ENCODE measurements at regions of chrX and their contacts with region 1.

Region 1: DNA sequence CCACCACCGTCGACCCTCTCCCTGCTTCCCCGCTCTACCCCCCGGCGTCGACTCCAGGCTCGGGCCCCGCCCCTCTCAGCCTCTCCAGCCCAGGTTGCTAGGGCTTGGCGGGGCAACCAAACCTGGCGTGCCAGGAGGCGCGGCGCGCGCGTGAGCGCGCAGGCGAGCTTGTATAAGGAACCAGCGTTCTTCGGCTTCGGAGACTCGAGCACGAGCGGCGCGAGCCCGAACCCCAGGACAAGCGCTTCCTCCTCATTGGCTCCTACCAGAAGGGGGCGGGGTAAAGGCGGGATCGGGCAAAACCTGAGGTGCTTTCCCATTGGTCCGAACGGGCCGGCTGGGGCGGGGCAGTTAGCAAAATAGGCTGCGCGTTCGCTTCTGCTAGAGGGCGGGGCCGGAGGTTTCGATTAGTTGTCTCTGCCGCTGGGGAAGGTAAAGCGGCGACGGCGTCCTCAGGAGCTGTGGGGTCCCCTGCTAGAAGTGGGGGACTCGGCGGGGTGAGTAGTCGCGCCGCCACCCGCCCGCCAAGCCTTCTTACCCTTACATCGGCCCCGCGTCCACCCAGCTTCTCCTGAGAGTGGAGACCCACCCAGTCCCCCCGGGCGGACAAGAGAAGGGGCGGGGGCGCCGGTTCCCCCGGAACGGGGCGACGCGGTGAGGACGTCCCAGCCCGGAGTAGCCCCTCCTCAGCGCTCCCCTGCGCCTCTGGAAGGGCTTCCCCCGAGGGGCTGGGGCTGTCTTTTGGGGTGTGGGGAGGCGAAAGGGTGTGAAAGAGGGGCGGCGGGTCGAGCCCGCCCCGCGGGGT is at the start of gene CDKL5:
- DNase-seq: peak; percentile 95 to 98 (median 97)
- ATAC-seq: peak; percentile 98 to 99 (median 98)
- H3K4me3 ChIP-seq: peak within 1 kb of the TSS; percentile 45 to 89 (median 77)
- H3K27ac ChIP-seq: peak within 1 kb of the TSS in 11 of 12 donors; percentile 53 to 87 (median 78)
- H3K4me1 ChIP-seq: peaks cover 0 to 12% (median 0%) of the 10 kb centered on the region in 12 donors
- H3K27me3 ChIP-seq: peaks cover 0 to 34% (median 0%) of the 10 kb centered on the region in 9 donors
- CTCF ChIP-seq: no peak
- POLR2A ChIP-seq: peak; percentile 64 to 93
- total RNA-seq, gene CDKL5: 5.4 to 12.5 (median 9.8) TPM

Region 2: GRCh38 chrX:17987783-17988182 is 437.6 kb before region 1 on chrX:
- intact Hi-C with region 1: no loop called
- DNase-seq: no peak
- ATAC-seq: no peak
- H3K4me3 ChIP-seq: no peak overlapping the region
- H3K27ac ChIP-seq: no peak overlapping the region
- H3K4me1 ChIP-seq: no peaks in the 10 kb centered on the region
- H3K27me3 ChIP-seq: peaks cover 0 to 8% (median 0%) of the 10 kb centered on the region in 9 donors
- CTCF ChIP-seq: no peak
- POLR2A ChIP-seq: no peak

Region 3: GRCh38 chrX:18574591-18574990 is 149.2 kb after region 1 on chrX:
- intact Hi-C with region 1: loop called in 1 of 10 experiments (anchors 10 kb)
- DNase-seq: peak in 4 of 5 donors; percentile 10 to 49 (median 36)
- ATAC-seq: peak; percentile 22 to 76 (median 69)
- H3K4me3 ChIP-seq: no peak overlapping the region
- H3K27ac ChIP-seq: peak overlapping the region in 1 of 12 donors; percentile 13
- H3K4me1 ChIP-seq: peaks cover 0 to 13% (median 0%) of the 10 kb centered on the region in 12 donors
- H3K27me3 ChIP-seq: no peaks in the 10 kb centered on the region
- CTCF ChIP-seq: no peak
- POLR2A ChIP-seq: no peak

Region 4: GRCh38 chrX:18596096-18596495 is 170.7 kb after region 1 on chrX:
- intact Hi-C with region 1: loop called in 1 of 10 experiments (anchors 10 kb)
- DNase-seq: no peak
- ATAC-seq: peak; percentile 57 to 85 (median 72)
- H3K4me3 ChIP-seq: no peak overlapping the region
- H3K27ac ChIP-seq: no peak overlapping the region
- H3K4me1 ChIP-seq: no peaks in the 10 kb centered on the region
- H3K27me3 ChIP-seq: no peaks in the 10 kb centered on the region
- CTCF ChIP-seq: no peak
- POLR2A ChIP-seq: no peak

Region 5: GRCh38 chrX:18674788-18675735 is 249.7 kb after region 1 on chrX:
- intact Hi-C with region 1: loop called in 6 of 10 experiments (anchors 5 to 10 kb)
- DNase-seq: peak; percentile 74 to 89 (median 78)
- ATAC-seq: peak; percentile 92 to 96 (median 93)
- H3K4me3 ChIP-seq: peak overlapping the region; percentile 36 to 93 (median 69)
- H3K27ac ChIP-seq: peak overlapping the region in 11 of 12 donors; percentile 76 to 92 (median 85)
- H3K4me1 ChIP-seq: no peaks in the 10 kb centered on the region
- H3K27me3 ChIP-seq: peaks cover 0 to 4% (median 0%) of the 10 kb centered on the region in 9 donors
- CTCF ChIP-seq: no peak
- POLR2A ChIP-seq: peak in 1 of 2 donors; percentile 34

Region 6: DNA sequence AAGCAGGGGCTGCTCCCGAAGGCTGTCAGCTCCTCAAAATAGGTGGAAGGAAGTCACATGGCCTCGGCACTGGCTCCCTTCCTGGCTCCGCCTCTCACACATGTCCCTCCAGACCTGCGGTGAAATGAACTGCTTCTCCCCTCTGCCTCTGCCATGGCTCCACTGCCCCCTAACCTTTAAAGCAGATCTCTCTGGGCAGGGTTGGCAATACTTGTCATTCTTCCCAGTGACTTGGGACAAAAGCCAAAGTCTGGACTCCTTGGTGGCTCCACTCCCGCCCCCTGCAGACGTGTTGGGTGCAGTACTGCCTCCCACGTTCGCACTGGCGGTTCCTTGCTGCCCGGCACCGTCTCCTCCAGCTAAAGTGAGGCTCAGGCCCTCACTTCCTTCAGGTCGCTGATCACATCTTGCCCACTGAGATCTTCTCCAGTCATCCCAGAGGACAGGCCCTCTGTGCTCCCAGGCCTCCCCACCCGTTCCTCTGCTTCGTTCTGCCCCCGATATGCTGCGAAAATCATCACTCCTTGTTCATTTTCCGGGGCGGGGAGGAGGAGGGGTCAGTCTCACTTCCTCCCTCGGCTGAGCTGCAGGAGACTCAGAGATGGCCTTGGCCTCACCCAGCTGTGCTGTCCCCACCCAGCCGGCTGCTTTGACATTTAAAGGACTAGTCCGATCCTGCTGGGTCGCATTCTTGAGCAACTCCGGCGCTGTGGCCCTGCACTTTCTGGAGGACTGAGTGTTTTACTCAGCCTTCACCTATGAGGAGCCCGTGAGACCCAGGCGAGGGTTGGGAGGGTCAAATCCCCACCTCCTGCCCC is 461.2 kb after region 1 on chrX:
- intact Hi-C with region 1: loop called in 5 of 10 experiments (anchors 2 to 10 kb)
- DNase-seq: peak; percentile 77 to 88 (median 83)
- ATAC-seq: peak; percentile 71 to 82 (median 76)
- H3K4me3 ChIP-seq: peak overlapping the region in 11 of 12 donors; percentile 10 to 60 (median 46)
- H3K27ac ChIP-seq: peak overlapping the region; percentile 80 to 96 (median 88)
- H3K4me1 ChIP-seq: peaks cover 0 to 42% (median 16%) of the 10 kb centered on the region in 12 donors
- H3K27me3 ChIP-seq: no peaks in the 10 kb centered on the region
- CTCF ChIP-seq: peak; percentile 24 to 62 (median 48)
- POLR2A ChIP-seq: peak in 1 of 2 donors; percentile 27

Region 7: DNA sequence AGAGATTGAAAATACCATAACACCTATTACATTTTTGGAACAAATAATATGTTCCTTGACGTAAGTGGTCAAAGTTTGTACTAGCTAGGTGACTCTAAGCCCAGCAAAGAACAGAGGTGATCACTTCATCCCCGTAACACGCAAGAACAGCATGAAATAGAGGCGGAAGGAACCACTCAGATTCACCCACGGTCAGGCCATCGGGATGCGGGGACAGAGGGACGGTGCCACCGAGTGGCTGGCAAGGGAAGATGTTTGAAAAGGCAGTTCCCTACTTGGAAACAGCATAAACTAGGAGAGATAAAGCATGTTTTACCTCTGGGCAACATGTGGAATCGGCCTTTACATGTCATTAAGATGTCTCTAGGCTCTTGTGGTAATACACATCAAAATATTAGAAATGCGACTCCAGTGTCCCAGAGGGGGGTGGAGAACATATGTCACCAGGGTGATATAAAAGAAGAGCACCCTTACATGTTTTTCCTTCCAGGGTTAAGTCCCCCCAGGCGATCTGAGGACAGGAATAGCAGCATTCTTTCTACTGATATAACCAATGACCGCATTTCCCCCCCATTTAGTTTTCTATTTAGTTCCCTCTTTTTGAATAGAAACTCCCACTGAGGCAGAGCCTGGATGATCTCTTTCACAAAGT is 474.5 kb after region 1 on chrX:
- intact Hi-C with region 1: loop called in 2 of 10 experiments (anchors 10 kb)
- DNase-seq: no peak
- ATAC-seq: no peak
- H3K4me3 ChIP-seq: no peak overlapping the region
- H3K27ac ChIP-seq: no peak overlapping the region
- H3K4me1 ChIP-seq: peaks cover 0 to 12% (median under 1%) of the 10 kb centered on the region in 12 donors
- H3K27me3 ChIP-seq: no peaks in the 10 kb centered on the region
- CTCF ChIP-seq: peak in 10 of 12 donors; percentile 14 to 55 (median 38)
- POLR2A ChIP-seq: no peak